CD8-positive, alpha-beta T cell (primary cell): ENCODE measurements at regions of chr11 and their contacts with region 1.

Region 1: GRCh38 chr11:111446404-111447111 is 65.6 kb downstream of the BTG4 start:
- DNase-seq: peak; percentile 42 to 93 (median 78)
- ATAC-seq: peak; percentile 99
- H3K4me3 ChIP-seq: no peak overlapping the region
- H3K4me3 Mint-ChIP-seq: no peak overlapping the region
- H3K27ac ChIP-seq: peak overlapping the region in 1 of 2 experiments; percentile 54
- H3K27ac Mint-ChIP-seq: no peak overlapping the region
- H3K4me1 ChIP-seq: peaks cover 13% of the 10 kb centered on the region
- H3K4me1 Mint-ChIP-seq: peaks cover 12% of the 10 kb centered on the region
- H3K27me3 ChIP-seq: no peaks in the 10 kb centered on the region
- H3K27me3 Mint-ChIP-seq: no peaks in the 10 kb centered on the region
- CTCF ChIP-seq: peak; percentile 59

Region 2: GRCh38 chr11:111177037-111177871 is 269.3 kb before region 1 on chr11:
- CTCF ChIA-PET with region 1: no interaction called
- POLR2A ChIA-PET with region 1: no interaction called
- intact Hi-C with region 1: no loop called
- DNase-seq: peak in 1 of 9 experiments; percentile 14
- ATAC-seq: no peak
- H3K4me3 ChIP-seq: no peak overlapping the region
- H3K4me3 Mint-ChIP-seq: no peak overlapping the region
- H3K27ac ChIP-seq: no peak overlapping the region
- H3K27ac Mint-ChIP-seq: no peak overlapping the region
- H3K4me1 ChIP-seq: no peaks in the 10 kb centered on the region
- H3K4me1 Mint-ChIP-seq: no peaks in the 10 kb centered on the region
- H3K27me3 ChIP-seq: no peaks in the 10 kb centered on the region
- H3K27me3 Mint-ChIP-seq: no peaks in the 10 kb centered on the region
- CTCF ChIP-seq: no peak

Region 3: GRCh38 chr11:111422494-111423249 is 23.9 kb before region 1 on chr11:
- CTCF ChIA-PET with region 1: interaction called, 13 read pairs
- POLR2A ChIA-PET with region 1: no interaction called
- intact Hi-C with region 1: no loop called
- DNase-seq: peak in 8 of 9 experiments; percentile 26 to 64 (median 40)
- ATAC-seq: peak; percentile 54
- H3K4me3 ChIP-seq: no peak overlapping the region
- H3K4me3 Mint-ChIP-seq: no peak overlapping the region
- H3K27ac ChIP-seq: no peak overlapping the region
- H3K27ac Mint-ChIP-seq: no peak overlapping the region
- H3K4me1 ChIP-seq: peaks cover 5% of the 10 kb centered on the region
- H3K4me1 Mint-ChIP-seq: peaks cover 13% of the 10 kb centered on the region
- H3K27me3 ChIP-seq: no peaks in the 10 kb centered on the region
- H3K27me3 Mint-ChIP-seq: peaks cover 2% of the 10 kb centered on the region
- CTCF ChIP-seq: peak; percentile 35

Region 4: DNA sequence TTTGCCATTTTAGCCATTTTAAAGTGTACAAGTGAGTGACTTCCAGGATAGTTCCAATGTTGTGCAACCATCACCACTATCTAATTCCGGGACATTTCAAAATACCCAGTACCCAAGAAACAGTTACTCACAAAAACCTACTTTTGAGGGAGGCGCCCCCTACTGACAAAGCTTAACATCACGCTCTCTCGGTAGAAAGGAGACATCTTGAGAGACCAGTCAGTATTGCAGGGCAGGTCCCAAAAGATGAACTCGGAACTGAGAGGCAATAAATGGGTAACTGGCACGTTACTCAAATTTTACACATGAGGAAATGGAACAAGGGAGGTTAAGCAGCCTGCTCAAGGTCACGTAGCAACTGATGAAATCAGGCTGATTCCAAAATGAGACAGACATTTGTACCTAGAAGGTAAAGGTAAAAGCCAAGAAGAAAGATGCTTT is 17.5 kb before region 1 on chr11:
- CTCF ChIA-PET with region 1: interaction called, 13 read pairs
- POLR2A ChIA-PET with region 1: no interaction called
- intact Hi-C with region 1: no loop called
- DNase-seq: peak in 5 of 9 experiments; percentile 29 to 56 (median 43)
- ATAC-seq: peak; percentile 42
- H3K4me3 ChIP-seq: no peak overlapping the region
- H3K4me3 Mint-ChIP-seq: no peak overlapping the region
- H3K27ac ChIP-seq: no peak overlapping the region
- H3K27ac Mint-ChIP-seq: no peak overlapping the region
- H3K4me1 ChIP-seq: no peaks in the 10 kb centered on the region
- H3K4me1 Mint-ChIP-seq: no peaks in the 10 kb centered on the region
- H3K27me3 ChIP-seq: no peaks in the 10 kb centered on the region
- H3K27me3 Mint-ChIP-seq: peaks cover 1% of the 10 kb centered on the region
- CTCF ChIP-seq: peak; percentile 40

Region 5: DNA sequence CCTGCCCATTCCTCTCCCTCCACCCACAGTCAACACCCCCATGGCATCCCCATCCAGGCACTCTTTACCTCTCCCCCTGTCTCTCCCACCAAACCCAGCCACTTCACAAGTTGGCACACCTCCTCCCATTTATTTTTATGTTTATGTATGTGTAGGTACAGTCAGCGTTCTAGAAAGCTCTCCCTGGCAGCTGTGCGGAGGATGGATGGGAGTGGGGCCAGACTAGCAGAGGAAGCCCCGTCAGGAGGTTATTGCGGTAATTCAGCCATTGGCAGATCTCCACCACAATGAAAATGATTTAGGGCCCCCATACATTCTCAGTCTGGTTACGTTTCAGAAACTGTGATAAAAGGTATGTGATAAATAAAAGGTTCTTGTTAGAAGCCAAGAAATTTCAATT is 14.3 kb after region 1 on chr11:
- CTCF ChIA-PET with region 1: interaction called, 13 read pairs
- POLR2A ChIA-PET with region 1: no interaction called
- intact Hi-C with region 1: no loop called
- DNase-seq: no peak
- ATAC-seq: no peak
- H3K4me3 ChIP-seq: no peak overlapping the region
- H3K4me3 Mint-ChIP-seq: no peak overlapping the region
- H3K27ac ChIP-seq: no peak overlapping the region
- H3K27ac Mint-ChIP-seq: no peak overlapping the region
- H3K4me1 ChIP-seq: no peaks in the 10 kb centered on the region
- H3K4me1 Mint-ChIP-seq: no peaks in the 10 kb centered on the region
- H3K27me3 ChIP-seq: peaks cover 0 to 2% of the 10 kb centered on the region in 2 experiments
- H3K27me3 Mint-ChIP-seq: peaks cover 11% of the 10 kb centered on the region
- CTCF ChIP-seq: no peak